ENCODE measurements at regions of chr3 and their contacts with region 1.

Region 1: GRCh38 chr3:177050501-177051237 is 146.6 kb downstream of the TBL1XR1 start:
- DNase-seq: no peak
- H3K4me3 ChIP-seq: no peak overlapping the region
- H3K27ac ChIP-seq: no peak overlapping the region
- H3K4me1 ChIP-seq: peaks cover 10% of the 10 kb centered on the region
- H3K27me3 ChIP-seq: no peaks in the 10 kb centered on the region
- CTCF ChIP-seq: peak; percentile 22 to 79 (median 66)
- POLR2A ChIP-seq: no peak

Region 2: GRCh38 chr3:176927706-176928581 is 122.7 kb before region 1 on chr3:
- intact Hi-C with region 1: no loop called
- DNase-seq: no peak
- H3K4me3 ChIP-seq: no peak overlapping the region
- H3K27ac ChIP-seq: no peak overlapping the region
- H3K4me1 ChIP-seq: no peaks in the 10 kb centered on the region
- H3K27me3 ChIP-seq: no peaks in the 10 kb centered on the region
- CTCF ChIP-seq: no peak
- POLR2A ChIP-seq: no peak

Region 3: DNA sequence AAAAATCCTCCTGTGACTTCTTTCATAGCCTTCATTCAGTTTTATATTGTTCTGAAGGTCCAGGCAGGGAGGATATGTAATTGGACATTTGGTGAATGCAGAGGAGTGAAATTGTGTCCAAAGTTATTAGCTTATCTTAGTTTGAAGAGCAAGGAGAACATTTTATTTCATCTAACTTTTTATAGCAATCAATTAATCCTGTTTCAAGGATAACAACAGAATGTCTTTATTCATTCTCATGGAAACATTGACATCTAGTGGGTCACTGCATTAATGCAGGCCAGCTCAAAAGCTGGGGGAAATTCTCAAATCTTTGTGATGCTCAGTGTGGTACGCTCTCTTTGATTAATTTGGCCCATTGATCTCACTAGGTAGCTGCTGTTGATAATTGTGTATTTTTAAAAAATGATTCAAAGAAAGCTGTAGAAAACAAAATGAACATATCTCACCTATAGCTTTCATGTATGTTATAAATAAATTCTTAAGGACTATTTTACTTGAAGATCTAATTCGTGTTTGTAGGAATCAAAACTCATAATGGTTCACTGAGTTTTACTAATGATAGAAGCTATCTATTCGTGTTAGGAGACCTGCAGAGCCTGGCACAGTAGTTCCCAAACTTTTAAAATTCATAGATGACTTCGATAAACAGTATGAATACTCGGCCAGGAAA is 1334.7 kb after region 1 on chr3:
- intact Hi-C with region 1: loop called (anchors 10 kb)
- DNase-seq: peak; percentile 33
- H3K4me3 ChIP-seq: peak overlapping the region in 1 of 2 donors; percentile 1
- H3K27ac ChIP-seq: peak overlapping the region; percentile 38 to 47
- H3K4me1 ChIP-seq: no peaks in the 10 kb centered on the region
- H3K27me3 ChIP-seq: no peaks in the 10 kb centered on the region
- CTCF ChIP-seq: peak; percentile 65 to 93 (median 82)
- POLR2A ChIP-seq: no peak

Measured in prostate gland (tissue), 2 donors.